ENCODE measurements at regions of chr11 and their contacts with region 1.

Region 1: GRCh38 chr11:65418711-65419459 is 3.7 kb upstream of the NEAT1 start:
- H3K4me3 ChIP-seq: peak overlapping the region; percentile 17
- H3K27ac ChIP-seq: peak overlapping the region; percentile 98
- H3K4me1 ChIP-seq: peaks cover 6% of the 10 kb centered on the region
- CTCF ChIP-seq: no peak

Region 2: DNA sequence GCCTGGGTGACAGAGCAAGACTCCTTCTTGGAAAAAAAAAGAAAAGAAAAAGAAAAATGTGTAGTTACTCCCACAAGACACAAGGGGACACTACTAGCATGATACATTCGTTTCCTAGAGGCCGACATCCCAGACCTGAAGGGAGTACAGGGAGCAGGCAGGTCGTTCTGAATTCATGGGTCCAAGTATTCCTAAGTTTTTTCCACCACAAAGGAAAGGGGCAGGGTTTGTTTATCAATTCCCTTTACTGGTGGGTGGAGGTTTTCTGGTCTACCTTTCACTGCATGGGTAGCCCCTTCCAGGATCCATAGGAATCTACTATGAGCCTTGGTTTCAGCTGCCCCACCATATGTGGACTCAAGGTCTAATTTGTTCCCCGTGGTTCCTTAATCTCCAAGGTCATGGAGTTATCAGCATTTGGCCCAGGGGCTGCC is 52.5 kb before region 1 on chr11:
- CTCF ChIA-PET with region 1: interaction called, 15 read pairs
- POLR2A ChIA-PET with region 1: interaction called, 28 read pairs
- H3K4me3 ChIP-seq: no peak overlapping the region
- H3K27ac ChIP-seq: no peak overlapping the region
- H3K4me1 ChIP-seq: no peaks in the 10 kb centered on the region
- CTCF ChIP-seq: peak; percentile 64

Region 3: DNA sequence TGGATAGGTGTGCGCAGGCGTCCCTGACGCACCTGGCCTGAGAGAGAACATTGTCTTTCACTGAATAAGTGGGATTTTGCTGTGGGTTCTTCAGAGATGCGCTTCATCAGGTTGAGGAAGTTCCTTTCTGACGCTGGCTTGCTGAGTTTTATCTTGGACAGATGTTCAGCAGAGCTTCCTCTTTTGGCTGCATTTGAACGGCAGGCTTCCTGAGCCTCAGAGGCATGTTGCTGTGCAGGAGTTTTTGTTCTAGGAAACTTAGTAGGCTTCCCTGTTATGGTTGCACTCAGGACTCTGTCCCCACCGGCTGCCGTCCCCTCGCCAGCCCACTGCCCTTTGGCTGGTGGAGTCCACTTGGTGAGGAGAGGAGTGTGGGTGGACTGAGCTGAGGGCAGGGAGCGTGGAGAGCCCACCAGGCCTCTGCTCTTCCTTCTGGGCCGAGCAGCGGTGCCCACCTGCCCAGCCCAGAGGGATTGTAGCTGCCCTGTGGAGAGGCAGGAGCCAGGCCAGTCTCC is 15.2 kb before region 1 on chr11:
- CTCF ChIA-PET with region 1: interaction called, 10 read pairs
- POLR2A ChIA-PET with region 1: interaction called, 6 read pairs
- H3K4me3 ChIP-seq: no peak overlapping the region
- H3K27ac ChIP-seq: no peak overlapping the region
- H3K4me1 ChIP-seq: no peaks in the 10 kb centered on the region
- CTCF ChIP-seq: no peak

Region 4: DNA sequence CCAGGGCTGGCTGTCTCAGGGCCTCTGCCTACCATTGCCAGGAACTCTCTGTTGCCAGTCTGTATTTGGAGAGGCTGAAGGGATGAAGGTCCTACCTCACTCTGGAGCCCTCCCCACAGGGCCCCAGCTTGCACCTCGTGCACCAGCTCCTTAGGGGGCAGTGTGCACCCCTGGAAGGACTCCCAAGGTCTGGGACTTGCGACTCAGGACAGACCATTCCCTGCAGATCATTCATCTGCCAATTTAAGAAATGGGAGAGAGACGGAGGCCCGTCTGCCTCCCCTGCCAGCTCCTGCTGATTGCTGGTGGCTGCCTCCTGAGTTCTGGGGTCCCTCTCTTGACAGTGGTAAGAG is 52.5 kb after region 1 on chr11:
- CTCF ChIA-PET with region 1: interaction called, 24 read pairs
- POLR2A ChIA-PET with region 1: interaction called, 65 read pairs
- H3K4me3 ChIP-seq: no peak overlapping the region
- H3K27ac ChIP-seq: peak overlapping the region; percentile 62
- H3K4me1 ChIP-seq: peaks cover 5% of the 10 kb centered on the region
- CTCF ChIP-seq: peak; percentile 42; the same call in 1 of the 2 replicates

Region 5: GRCh38 chr11:65506770-65507505 is 88.1 kb after region 1 on chr11:
- CTCF ChIA-PET with region 1: interaction called, 36 read pairs
- POLR2A ChIA-PET with region 1: interaction called, 1,129 read pairs
- H3K4me3 ChIP-seq: peak overlapping the region; percentile 27
- H3K27ac ChIP-seq: peak overlapping the region; percentile 24; the same call in 1 of the 2 replicates
- H3K4me1 ChIP-seq: no peaks in the 10 kb centered on the region
- CTCF ChIP-seq: no peak